Activated T-helper 1 cell treated with anti-CD3 and anti-CD28 coated beads, Interleukin-12 subunit alpha, Interleukin-12 subunit beta, Interleukin-2, Interleukin-4 antibody, amounts not matched to agents 30 ng/mL and 10 ng/mL and 1 ng/mL, durations not matched to agents 14 hours and 24 hours and 36 hours (primary cell): ENCODE measurements at regions of chr17 and their contacts with region 1.

Region 1: GRCh38 chr17:64984851-64985521 is 65.7 kb upstream of the LRRC37A3 start:
- DNase-seq: peak; percentile 44
- H3K4me3 Mint-ChIP-seq: peak overlapping the region; percentile 82
- H3K27ac Mint-ChIP-seq: peak overlapping the region; percentile 99
- H3K4me1 Mint-ChIP-seq: peaks cover 47% of the 10 kb centered on the region
- H3K27me3 Mint-ChIP-seq: no peaks in the 10 kb centered on the region

Region 2: GRCh38 chr17:65013613-65014391 is 28.8 kb after region 1 on chr17:
- intact Hi-C with region 1: loop called (anchors 1 kb)
- DNase-seq: peak; percentile 13
- H3K4me3 Mint-ChIP-seq: no peak overlapping the region
- H3K27ac Mint-ChIP-seq: peak overlapping the region; percentile 43
- H3K4me1 Mint-ChIP-seq: peaks cover 65% of the 10 kb centered on the region
- H3K27me3 Mint-ChIP-seq: no peaks in the 10 kb centered on the region

Region 3: GRCh38 chr17:65039336-65039988 is 54.5 kb after region 1 on chr17:
- intact Hi-C with region 1: loop called (anchors 1 kb)
- DNase-seq: peak; percentile 46
- H3K4me3 Mint-ChIP-seq: peak overlapping the region; percentile 58
- H3K27ac Mint-ChIP-seq: peak overlapping the region; percentile 82
- H3K4me1 Mint-ChIP-seq: peaks cover 78% of the 10 kb centered on the region
- H3K27me3 Mint-ChIP-seq: no peaks in the 10 kb centered on the region

Region 4: DNA sequence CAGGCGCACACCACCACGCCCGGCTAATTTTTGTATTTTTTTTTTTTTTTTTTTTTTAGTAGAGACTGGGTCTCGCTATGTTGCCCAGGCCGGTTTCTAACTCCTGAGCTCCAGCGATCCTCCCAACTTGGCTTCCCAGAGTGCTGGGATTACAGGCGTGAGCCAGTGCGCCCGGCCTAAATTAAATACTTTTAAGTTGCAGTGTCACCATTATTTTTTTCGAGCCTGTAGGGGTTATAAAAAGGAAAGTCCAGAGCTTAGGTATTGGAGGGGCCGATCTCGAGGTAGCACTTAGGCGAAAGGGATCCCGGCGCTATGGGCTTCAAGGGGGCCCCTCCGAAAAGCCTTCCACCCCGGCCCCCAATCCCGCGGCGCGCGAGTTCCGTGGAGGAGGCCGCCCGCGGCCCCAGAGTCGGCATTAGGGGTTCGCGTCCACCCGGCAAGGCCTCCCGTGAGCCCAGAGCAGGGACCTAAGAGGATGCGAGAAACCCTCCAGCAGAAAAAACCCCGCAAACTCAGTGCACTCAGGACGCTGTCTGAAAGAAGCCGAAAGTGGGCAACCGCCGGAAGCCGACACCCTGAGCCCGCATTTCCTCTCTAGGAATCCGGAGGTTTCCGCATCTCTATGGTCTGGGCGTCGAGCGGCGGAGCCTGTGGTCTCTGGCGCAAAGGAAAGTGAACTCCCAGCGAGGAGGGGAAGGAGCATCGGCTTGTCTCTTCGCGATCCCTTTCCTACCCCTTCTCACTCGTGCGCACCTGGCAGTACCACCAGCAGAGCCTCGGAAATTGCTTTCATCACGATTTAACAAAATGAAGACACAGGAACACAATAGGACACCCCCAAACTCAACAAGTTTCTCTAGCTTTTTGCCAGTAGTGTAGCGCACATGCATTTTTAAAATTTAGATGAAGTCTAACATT is 138.1 kb after region 1 on chr17:
- intact Hi-C with region 1: loop called (anchors 2 kb)
- DNase-seq: peak; percentile 82
- H3K4me3 Mint-ChIP-seq: peak overlapping the region; percentile 82
- H3K27ac Mint-ChIP-seq: peak overlapping the region; percentile 89
- H3K4me1 Mint-ChIP-seq: peaks cover 32% of the 10 kb centered on the region
- H3K27me3 Mint-ChIP-seq: peaks cover 4% of the 10 kb centered on the region

Region 5: GRCh38 chr17:65181237-65182061 is 196.5 kb after region 1 on chr17:
- intact Hi-C with region 1: loop called (anchors 5 kb)
- DNase-seq: peak; percentile 32
- H3K4me3 Mint-ChIP-seq: peak overlapping the region; percentile 31
- H3K27ac Mint-ChIP-seq: peak overlapping the region; percentile 78
- H3K4me1 Mint-ChIP-seq: peaks cover 79% of the 10 kb centered on the region
- H3K27me3 Mint-ChIP-seq: peaks cover 11% of the 10 kb centered on the region